ENCODE measurements at regions of chr12 and their contacts with region 1.

Region 1: DNA sequence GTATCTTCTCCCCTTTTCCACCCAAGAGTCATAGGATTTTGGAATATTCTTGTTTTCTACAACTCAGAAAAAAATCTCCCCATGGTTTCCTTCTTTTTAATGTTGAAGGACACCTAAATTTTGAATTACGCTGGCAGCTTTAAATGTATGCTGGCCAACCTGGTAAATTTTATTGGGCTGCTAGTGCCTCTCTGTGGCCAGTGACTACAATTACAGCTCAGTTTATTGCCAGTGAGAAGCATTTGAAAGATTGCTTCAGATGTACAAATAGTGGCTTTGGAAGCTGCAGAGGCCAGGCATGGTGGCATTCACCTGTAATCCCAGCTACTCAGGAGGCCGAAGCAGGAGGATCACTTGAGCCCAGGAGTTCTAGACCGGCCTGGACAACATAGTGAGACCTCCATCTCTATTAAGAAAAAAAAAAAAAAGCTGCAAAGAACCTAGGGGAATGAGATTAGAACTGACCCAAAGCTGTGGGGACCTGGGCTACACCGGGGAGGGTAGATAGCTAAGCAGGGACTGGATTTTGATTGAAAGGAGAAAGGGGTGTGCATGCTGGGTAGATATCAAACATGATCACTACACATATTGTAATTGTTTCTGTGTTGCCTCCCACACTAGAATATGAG is 7.6 kb upstream of the RAB21 start:
- DNase-seq: peak; percentile 76
- H3K4me3 Mint-ChIP-seq: no peak overlapping the region
- H3K27ac Mint-ChIP-seq: no peak overlapping the region
- H3K4me1 Mint-ChIP-seq: no peaks in the 10 kb centered on the region
- H3K27me3 Mint-ChIP-seq: peaks cover 30% of the 10 kb centered on the region
- CTCF ChIP-seq: peak; percentile 78

Region 2: DNA sequence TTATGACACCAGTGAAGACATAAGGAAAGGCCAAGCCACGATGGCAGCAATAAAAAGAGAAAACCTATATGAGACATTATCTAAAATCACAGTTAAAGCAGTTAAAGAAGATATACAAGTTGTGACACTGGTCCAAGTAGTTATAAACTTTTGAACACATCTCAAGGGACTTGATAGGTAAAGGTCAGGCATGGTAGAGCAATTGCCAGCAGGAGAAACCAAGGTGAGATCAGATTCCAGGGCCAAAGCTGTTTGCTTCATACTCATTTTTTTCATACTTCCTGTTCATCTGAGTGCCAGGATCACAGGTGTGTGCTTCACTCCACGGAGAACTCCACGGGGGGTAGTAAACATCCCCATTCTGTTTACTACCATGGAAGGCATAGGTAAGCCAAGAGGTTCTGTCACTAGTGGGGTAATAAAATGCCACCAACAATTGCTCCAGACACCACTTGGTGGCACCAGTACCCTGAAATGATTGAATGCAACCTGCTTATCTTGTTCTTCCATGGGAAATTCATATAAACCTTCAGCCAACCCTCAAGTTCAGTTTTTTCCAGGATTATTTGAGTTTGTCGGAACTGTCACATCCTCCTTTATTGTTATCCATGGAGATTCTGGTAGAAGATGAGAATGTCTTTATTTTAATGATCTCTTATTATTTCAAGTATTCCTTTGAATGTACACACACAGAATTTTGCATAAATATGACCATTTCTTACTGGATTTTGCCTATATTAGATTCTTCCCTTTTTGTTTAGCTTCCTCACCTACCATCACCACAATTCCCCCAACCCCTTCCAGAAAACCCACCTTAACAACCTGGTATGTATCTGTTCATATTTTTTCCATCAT is 530.1 kb before region 1 on chr12:
- CTCF ChIA-PET with region 1: interaction called, 6 read pairs
- POLR2A ChIA-PET with region 1: no interaction called
- intact Hi-C with region 1: loop called (anchors 5 kb)
- DNase-seq: peak; percentile 69
- H3K4me3 Mint-ChIP-seq: no peak overlapping the region
- H3K27ac Mint-ChIP-seq: no peak overlapping the region
- H3K4me1 Mint-ChIP-seq: no peaks in the 10 kb centered on the region
- H3K27me3 Mint-ChIP-seq: no peaks in the 10 kb centered on the region
- CTCF ChIP-seq: peak; percentile 55

Region 3: GRCh38 chr12:71594214-71594948 is 152.7 kb before region 1 on chr12:
- CTCF ChIA-PET with region 1: no interaction called
- POLR2A ChIA-PET with region 1: no interaction called
- intact Hi-C with region 1: no loop called
- DNase-seq: no peak
- H3K4me3 Mint-ChIP-seq: no peak overlapping the region
- H3K27ac Mint-ChIP-seq: no peak overlapping the region
- H3K4me1 Mint-ChIP-seq: no peaks in the 10 kb centered on the region
- H3K27me3 Mint-ChIP-seq: no peaks in the 10 kb centered on the region
- CTCF ChIP-seq: no peak

Region 4: DNA sequence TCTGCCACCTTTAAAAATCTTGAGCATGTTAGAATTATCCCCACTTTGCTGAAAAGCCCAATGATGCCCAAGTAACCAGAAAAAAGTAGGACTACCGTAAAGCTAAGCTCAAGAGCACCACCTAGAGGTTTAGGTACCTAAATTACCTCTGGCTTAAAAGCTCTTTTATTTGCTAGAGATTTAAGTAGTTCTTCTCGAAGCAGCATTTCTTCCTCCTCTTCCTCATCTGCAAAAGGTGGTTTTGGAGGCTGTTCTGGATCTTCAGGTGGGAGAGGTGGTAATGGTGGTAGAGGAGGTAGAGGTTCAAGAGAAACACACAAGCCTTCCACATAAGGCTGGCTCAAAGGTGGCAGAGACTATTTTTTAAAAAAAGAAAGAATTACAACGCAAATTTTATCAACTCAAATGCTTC is 110.4 kb before region 1 on chr12:
- CTCF ChIA-PET with region 1: interaction called, 62 read pairs
- POLR2A ChIA-PET with region 1: interaction called, 11 read pairs
- intact Hi-C with region 1: loop called (anchors 1 kb)
- DNase-seq: peak; percentile 70
- H3K4me3 Mint-ChIP-seq: no peak overlapping the region
- H3K27ac Mint-ChIP-seq: no peak overlapping the region
- H3K4me1 Mint-ChIP-seq: peaks cover 6% of the 10 kb centered on the region
- H3K27me3 Mint-ChIP-seq: no peaks in the 10 kb centered on the region
- CTCF ChIP-seq: peak; percentile 66

Region 5: DNA sequence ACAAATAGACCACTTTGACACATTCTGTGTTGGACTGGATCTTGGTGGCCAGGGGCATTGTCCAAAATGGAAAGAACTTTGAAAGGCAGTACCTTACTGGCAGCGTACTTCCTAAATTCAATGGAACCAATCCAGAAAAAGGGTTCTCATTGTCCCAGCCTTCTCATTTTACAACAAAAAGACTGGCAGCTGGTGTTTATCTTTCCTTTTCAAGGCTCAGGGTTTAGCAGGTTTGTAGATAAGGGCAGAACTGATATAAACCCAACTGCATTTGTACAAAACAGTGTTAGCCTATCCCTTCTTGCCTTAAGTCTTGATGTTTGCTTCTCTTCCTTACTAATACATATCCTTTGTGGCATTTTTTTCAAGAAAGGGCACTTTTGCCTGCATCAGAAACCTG is 75.3 kb before region 1 on chr12:
- CTCF ChIA-PET with region 1: interaction called, 12 read pairs
- POLR2A ChIA-PET with region 1: interaction called, 4 read pairs
- intact Hi-C with region 1: no loop called
- DNase-seq: no peak
- H3K4me3 Mint-ChIP-seq: no peak overlapping the region
- H3K27ac Mint-ChIP-seq: no peak overlapping the region
- H3K4me1 Mint-ChIP-seq: peaks cover 5% of the 10 kb centered on the region
- H3K27me3 Mint-ChIP-seq: no peaks in the 10 kb centered on the region
- CTCF ChIP-seq: no peak

Region 6: GRCh38 chr12:71719615-71720370 is 27.3 kb before region 1 on chr12:
- CTCF ChIA-PET with region 1: interaction called, 19 read pairs
- POLR2A ChIA-PET with region 1: interaction called, 13 read pairs
- intact Hi-C with region 1: no loop called
- DNase-seq: peak; percentile 92
- H3K4me3 Mint-ChIP-seq: no peak overlapping the region
- H3K27ac Mint-ChIP-seq: peak overlapping the region; percentile 30
- H3K4me1 Mint-ChIP-seq: peaks cover 7% of the 10 kb centered on the region
- H3K27me3 Mint-ChIP-seq: no peaks in the 10 kb centered on the region
- CTCF ChIP-seq: no peak

Region 7: DNA sequence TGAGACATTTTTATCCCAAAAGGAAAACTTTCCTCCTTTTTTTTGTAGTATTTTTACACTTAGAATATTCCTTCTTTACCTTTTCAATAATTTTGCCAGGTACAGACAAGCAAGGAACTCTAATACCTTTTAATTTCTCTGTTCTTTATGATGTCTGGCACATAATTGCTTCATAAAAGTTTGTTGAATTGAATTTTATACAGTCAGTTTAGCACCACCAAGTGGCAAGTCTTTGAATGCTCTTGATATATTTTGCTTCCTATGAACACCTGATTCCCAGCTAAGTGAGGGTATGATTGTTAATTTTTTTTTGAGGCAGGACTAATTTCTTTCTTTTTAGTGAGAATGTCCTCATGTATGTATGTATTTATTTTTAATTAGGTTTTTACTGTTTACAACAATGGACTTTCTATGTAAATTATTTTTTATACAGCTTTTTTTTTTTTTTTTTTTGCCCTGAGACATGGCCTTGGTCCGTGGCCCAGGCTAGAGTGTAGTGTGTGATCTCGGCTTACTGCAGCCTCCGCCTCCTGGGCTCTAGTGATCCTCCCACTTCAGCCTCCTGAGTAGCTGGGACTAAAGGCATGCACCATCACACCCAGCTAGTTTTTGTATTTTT is 99.3 kb after region 1 on chr12:
- CTCF ChIA-PET with region 1: interaction called, 13 read pairs
- POLR2A ChIA-PET with region 1: no interaction called
- intact Hi-C with region 1: no loop called
- DNase-seq: peak; percentile 57
- H3K4me3 Mint-ChIP-seq: no peak overlapping the region
- H3K27ac Mint-ChIP-seq: no peak overlapping the region
- H3K4me1 Mint-ChIP-seq: peaks cover 4% of the 10 kb centered on the region
- H3K27me3 Mint-ChIP-seq: no peaks in the 10 kb centered on the region
- CTCF ChIP-seq: peak; percentile 48